HEK293T (cell line): ENCODE measurements at regions of chr21 and their contacts with region 1.

Region 1: DNA sequence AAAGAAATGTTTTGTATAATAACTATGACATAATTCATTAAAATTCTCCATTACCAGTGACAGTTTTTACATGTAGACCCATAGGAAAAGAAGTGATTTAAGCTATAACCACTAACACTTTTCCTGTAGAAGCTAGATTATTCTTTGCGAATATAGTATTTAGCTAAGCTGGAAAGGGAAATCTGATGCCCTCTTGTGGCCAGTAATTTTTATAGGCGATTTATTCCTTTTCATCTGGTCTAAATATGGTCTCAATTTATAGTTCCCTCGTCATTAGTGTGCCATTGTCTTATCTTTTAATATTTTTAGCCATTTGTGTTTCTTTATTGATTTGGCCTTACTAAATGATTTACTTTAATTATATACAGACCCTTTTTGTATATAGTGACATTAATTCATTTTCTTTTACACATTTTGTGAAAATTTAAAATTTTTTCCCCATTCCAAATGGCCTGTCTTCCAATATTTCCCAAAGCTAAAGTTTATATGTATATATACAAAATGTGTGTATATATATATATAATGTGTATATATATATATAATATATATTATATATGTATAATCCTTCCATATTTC is 26.7 kb downstream of the BTG3 start:
- DNase-seq: peak; percentile 26

Region 2: DNA sequence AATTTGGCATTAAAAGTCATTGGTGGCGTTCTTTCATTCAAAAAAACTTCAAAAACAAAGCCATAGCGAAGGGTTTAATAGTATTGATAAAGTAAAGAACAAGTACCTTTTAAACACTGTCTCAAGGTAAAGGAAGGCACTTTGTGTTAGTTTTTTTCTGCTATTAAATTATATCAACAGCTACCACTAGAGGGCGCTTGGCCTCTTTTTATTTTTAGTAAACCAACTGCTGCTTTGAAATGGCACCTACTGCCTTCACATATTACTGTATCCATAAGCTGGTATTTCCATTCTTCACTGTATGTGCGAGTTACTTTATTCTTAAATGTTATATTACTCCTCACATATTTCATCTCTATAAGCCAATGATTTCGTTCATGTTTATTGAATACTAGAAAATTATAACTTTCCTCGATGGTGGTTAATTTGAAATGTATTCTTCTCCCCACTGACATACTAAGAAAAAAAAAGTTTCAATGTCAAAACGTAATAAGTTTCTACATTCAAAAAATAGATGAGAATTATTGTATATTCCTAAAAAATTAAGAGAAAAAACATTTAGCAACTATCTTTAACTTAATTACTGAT is 198.8 kb before region 1 on chr21:
- CTCF ChIA-PET with region 1: interaction called, 24 read pairs
- POLR2A ChIA-PET with region 1: no interaction called
- DNase-seq: peak; percentile 62

Region 3: GRCh38 chr21:17414766-17415165 is 171.2 kb before region 1 on chr21:
- CTCF ChIA-PET with region 1: no interaction called
- POLR2A ChIA-PET with region 1: no interaction called
- DNase-seq: no peak

Region 4: GRCh38 chr21:17570786-17571185 is 15.2 kb before region 1 on chr21:
- CTCF ChIA-PET with region 1: no interaction called
- POLR2A ChIA-PET with region 1: no interaction called
- DNase-seq: no peak